Body of pancreas (tissue), 4 donors: ENCODE measurements at regions of chr3 and their contacts with region 1.

Region 1: DNA sequence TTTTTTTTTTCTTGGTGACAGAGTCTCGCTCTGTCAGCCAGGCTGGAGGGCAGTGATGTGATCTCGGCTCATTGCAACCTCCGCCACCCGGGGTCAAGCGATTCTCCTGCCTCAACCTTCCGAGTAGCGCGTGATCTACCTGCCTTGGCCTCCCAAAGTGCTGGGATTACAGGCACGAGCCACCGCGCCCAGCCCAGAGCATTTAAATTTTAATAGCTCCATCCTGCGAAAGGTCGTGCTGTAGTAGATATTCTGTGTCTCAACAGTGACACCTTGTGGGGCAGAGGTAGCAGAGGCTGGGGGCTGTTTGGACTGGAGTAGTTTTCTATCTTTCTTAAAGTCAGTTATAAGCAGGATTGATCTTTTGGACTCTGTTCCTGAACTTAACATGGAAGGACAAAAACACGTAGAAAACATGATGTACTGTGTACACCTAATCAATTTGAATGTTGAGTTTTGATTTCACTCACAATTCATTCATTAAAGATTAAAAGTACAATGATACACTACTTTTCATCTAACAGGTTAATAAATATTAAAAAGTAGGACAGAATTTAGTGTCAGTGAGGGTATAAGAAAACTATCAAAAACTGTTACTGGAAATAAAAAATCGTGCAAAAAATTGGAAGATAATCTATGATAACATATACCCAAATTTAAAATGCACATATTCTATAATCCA is 11.0 kb upstream of the PDCD6IP start:
- DNase-seq: peak; percentile 56 to 79 (median 66)
- ATAC-seq: peak; percentile 85
- H3K4me3 ChIP-seq: no peak overlapping the region
- H3K27ac ChIP-seq: no peak overlapping the region
- H3K4me1 ChIP-seq: peaks cover 5% of the 10 kb centered on the region
- H3K27me3 ChIP-seq: no peaks in the 10 kb centered on the region
- CTCF ChIP-seq: peak; percentile 59 to 81 (median 72)
- POLR2A ChIP-seq: no peak

Region 2: GRCh38 chr3:33131331-33132018 is 656.0 kb before region 1 on chr3:
- intact Hi-C with region 1: loop called (anchors 10 kb)
- DNase-seq: peak; percentile 46 to 72 (median 62)
- ATAC-seq: peak; percentile 69
- H3K4me3 ChIP-seq: no peak overlapping the region
- H3K27ac ChIP-seq: no peak overlapping the region
- H3K4me1 ChIP-seq: peaks cover 3% of the 10 kb centered on the region
- H3K27me3 ChIP-seq: no peaks in the 10 kb centered on the region
- CTCF ChIP-seq: peak; percentile 27 to 77 (median 72)
- POLR2A ChIP-seq: no peak

Region 3: GRCh38 chr3:33360136-33360825 is 427.2 kb before region 1 on chr3:
- intact Hi-C with region 1: no loop called
- DNase-seq: no peak
- ATAC-seq: no peak
- H3K4me3 ChIP-seq: no peak overlapping the region
- H3K27ac ChIP-seq: no peak overlapping the region
- H3K4me1 ChIP-seq: peaks cover 10% of the 10 kb centered on the region
- H3K27me3 ChIP-seq: no peaks in the 10 kb centered on the region
- CTCF ChIP-seq: no peak
- POLR2A ChIP-seq: no peak

Region 4: GRCh38 chr3:33634262-33634661 is 153.2 kb before region 1 on chr3:
- intact Hi-C with region 1: loop called (anchors 5 kb)
- DNase-seq: no peak
- ATAC-seq: no peak
- H3K4me3 ChIP-seq: no peak overlapping the region
- H3K27ac ChIP-seq: no peak overlapping the region
- H3K4me1 ChIP-seq: peaks cover 16% of the 10 kb centered on the region
- H3K27me3 ChIP-seq: no peaks in the 10 kb centered on the region
- CTCF ChIP-seq: no peak
- POLR2A ChIP-seq: no peak

Region 5: DNA sequence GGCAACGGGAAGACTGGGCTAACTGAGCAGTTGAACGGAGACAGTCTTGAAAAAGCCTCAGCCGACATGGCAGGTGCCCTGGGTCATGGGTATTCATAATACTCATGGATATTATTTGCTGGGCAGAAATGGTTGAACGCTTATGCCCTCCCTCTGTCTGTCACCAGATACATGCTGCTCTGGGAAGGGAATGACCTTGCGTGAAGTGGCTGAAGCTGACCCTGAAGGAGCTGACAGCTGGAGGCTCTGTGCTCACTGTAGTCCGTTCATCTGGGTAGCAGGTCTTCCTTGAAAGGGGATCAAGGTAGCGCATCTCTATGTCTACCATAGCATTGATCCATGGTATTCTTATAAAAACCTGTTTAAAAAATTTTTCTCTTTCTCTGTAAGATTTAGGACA is 401.7 kb after region 1 on chr3:
- intact Hi-C with region 1: no loop called
- DNase-seq: no peak
- ATAC-seq: no peak
- H3K4me3 ChIP-seq: no peak overlapping the region
- H3K27ac ChIP-seq: no peak overlapping the region
- H3K4me1 ChIP-seq: no peaks in the 10 kb centered on the region
- H3K27me3 ChIP-seq: no peaks in the 10 kb centered on the region
- CTCF ChIP-seq: no peak
- POLR2A ChIP-seq: no peak

Region 6: DNA sequence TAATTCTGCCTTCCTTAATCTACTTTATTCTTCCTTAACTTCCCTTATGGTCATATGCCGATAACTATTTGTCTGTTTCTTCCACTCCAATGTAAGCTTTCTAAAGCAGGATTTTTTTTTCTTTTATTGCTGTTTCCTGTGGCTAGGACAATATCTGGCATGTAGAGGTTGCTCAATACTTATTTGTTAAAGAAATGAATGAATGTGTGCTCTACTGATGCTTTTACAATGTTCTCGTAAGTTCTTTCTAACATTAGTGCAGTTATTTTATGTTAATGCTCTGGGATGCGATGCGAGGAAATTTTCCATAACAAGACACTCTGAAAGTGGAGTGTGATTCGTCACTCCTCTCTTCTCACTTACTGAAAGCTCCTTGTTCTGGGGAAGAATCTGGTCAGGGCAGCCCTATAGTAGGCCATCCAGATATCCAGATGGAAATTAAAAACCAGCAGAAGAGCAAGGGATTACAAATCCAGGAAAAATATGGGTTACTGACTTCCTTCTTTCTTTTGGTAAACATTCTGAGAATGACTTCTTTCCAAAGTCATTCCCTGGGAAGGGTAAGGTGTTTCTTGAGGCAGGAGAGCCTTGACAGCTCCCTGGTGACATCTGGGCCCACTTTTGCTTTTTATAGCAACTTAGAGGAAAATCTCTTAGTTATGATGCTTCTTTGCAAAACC is 431.4 kb after region 1 on chr3:
- intact Hi-C with region 1: no loop called
- DNase-seq: no peak
- ATAC-seq: no peak
- H3K4me3 ChIP-seq: no peak overlapping the region
- H3K27ac ChIP-seq: no peak overlapping the region
- H3K4me1 ChIP-seq: no peaks in the 10 kb centered on the region
- H3K27me3 ChIP-seq: no peaks in the 10 kb centered on the region
- CTCF ChIP-seq: no peak
- POLR2A ChIP-seq: no peak